CD8-positive, alpha-beta T cell (primary cell): ENCODE measurements at regions of chr5 and their contacts with region 1.

Region 1: DNA sequence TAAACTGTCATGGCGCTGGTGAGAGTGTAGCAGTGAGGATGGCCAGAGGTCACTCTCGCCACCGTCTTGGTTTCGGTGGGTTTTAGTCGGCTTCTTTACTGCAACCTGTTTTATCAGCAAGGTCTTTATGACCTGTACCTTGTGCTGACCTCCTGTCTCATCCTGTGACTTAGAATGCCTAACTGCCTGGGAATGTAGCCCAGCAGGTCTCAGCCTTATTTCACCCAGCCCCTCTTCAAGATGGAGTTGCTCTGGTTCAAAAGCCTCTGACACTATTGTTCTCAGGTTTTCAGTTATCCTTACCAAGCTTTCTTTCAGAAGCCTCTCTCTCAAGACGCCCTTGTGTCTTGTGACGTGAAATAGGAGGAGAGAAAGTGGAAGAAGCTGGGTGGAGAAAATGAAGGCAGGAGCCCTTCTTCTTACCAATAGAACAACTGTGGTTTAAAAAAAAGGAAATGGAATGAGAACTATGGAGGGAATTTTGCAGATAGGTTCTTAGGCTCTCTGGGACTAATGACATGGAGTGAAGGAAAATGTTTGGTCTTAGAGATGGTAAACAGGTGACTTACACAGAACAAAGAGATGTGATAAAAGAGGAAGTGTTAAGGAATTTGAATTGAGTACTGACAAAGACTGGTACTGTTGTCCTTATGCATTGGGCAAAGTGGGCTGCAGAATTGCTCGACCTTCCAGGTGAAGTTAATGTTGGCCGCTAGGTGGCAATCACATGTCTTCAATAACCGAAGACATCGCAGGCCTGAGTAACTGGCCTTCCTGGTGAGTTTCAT is 133.3 kb upstream of the RAI14 start:
- DNase-seq: peak in 8 of 9 experiments; percentile 21 to 70 (median 56)
- ATAC-seq: no peak
- H3K4me3 ChIP-seq: no peak overlapping the region
- H3K4me3 Mint-ChIP-seq: no peak overlapping the region
- H3K27ac ChIP-seq: no peak overlapping the region
- H3K27ac Mint-ChIP-seq: no peak overlapping the region
- H3K4me1 ChIP-seq: no peaks in the 10 kb centered on the region
- H3K4me1 Mint-ChIP-seq: peaks cover 2% of the 10 kb centered on the region
- H3K27me3 ChIP-seq: no peaks in the 10 kb centered on the region
- H3K27me3 Mint-ChIP-seq: peaks cover 4% of the 10 kb centered on the region
- CTCF ChIP-seq: peak; percentile 72

Region 2: GRCh38 chr5:34415559-34416198 is 107.1 kb before region 1 on chr5:
- CTCF ChIA-PET with region 1: no interaction called
- POLR2A ChIA-PET with region 1: no interaction called
- intact Hi-C with region 1: no loop called
- DNase-seq: no peak
- ATAC-seq: no peak
- H3K4me3 ChIP-seq: no peak overlapping the region
- H3K4me3 Mint-ChIP-seq: no peak overlapping the region
- H3K27ac ChIP-seq: no peak overlapping the region
- H3K27ac Mint-ChIP-seq: no peak overlapping the region
- H3K4me1 ChIP-seq: no peaks in the 10 kb centered on the region
- H3K4me1 Mint-ChIP-seq: no peaks in the 10 kb centered on the region
- H3K27me3 ChIP-seq: no peaks in the 10 kb centered on the region
- H3K27me3 Mint-ChIP-seq: peaks cover 8% of the 10 kb centered on the region
- CTCF ChIP-seq: no peak

Region 3: DNA sequence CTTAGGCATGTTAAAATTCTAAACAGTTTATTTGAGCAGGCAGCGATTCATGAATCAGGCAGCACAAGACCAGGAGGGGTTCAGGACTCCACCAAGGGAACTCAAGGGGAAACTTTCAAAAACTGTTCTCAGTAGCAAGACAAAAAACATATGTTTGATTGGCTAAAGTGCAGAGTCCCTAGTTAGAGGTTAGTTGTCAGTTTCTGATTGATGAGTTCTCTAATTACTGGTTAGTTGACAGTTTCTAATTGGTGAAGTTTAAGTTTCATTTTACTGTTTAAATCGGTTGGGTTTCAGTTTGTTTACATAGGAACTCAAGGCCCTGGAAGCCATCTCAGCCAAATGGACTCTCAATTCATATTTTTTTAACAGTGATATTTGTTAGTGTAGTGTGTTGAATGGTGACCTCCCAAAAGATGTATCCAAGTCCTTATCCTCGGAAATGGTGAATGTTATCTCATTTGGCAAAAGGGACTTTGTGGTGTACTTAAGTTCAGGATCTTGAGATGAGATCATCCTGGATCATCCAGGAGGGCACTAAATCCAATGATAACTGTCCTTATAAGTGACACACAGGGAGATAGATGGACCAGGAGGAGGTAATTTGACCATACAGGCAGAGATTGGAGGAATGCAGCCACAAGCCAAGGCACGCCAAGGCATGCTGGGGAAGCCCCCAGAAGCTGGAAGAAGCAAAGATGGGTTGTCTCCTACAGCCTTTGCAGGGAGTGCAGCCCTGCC is 85.9 kb before region 1 on chr5:
- CTCF ChIA-PET with region 1: no interaction called
- POLR2A ChIA-PET with region 1: no interaction called
- intact Hi-C with region 1: no loop called
- DNase-seq: no peak
- ATAC-seq: no peak
- H3K4me3 ChIP-seq: no peak overlapping the region
- H3K4me3 Mint-ChIP-seq: no peak overlapping the region
- H3K27ac ChIP-seq: no peak overlapping the region
- H3K27ac Mint-ChIP-seq: no peak overlapping the region
- H3K4me1 ChIP-seq: no peaks in the 10 kb centered on the region
- H3K4me1 Mint-ChIP-seq: no peaks in the 10 kb centered on the region
- H3K27me3 ChIP-seq: no peaks in the 10 kb centered on the region
- H3K27me3 Mint-ChIP-seq: peaks cover 6% of the 10 kb centered on the region
- CTCF ChIP-seq: no peak

Region 4: DNA sequence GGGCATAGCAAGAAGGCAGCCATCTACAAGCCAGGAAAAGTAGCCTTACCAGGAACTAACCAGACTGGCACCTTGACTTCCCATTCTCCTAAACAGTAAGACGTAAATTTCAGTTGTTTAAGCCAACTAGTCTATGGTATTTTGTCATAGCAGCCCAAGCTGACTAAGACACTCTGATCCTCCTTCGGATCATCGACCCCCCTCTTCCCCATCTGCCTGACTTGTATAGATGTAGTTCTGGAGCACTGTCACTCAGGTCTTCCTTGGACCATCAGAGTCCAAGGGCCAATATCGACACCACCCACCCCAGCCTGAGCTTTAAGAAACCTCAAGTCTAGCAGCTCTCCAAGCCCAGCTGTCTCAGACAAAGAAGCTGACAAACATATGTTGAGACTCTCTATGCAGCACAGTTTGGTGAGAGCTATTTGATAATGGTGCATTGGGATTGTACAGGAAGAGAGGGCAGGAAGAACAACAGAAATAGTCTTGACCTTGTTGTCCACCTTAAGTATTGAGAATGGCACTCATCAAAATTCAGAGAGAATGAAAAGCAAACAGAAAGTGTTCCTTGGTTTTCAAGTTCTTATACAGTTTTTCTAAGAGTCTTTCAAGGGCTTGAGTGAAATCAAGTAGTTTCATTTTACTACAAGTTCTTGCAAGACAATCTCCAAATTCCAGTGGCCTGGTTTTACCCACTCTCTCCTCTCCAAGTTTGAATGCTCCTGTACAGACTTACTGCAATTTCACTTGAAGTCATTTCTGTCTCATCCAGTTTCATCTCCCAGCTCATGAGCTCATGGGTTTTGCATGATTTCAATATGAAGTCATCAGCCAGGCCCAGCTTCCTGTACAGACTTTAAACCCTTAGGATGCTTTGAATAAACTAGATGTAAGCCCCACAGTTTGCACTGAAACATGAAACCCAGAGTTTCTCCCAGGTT is 11.1 kb after region 1 on chr5:
- CTCF ChIA-PET with region 1: interaction called, 22 read pairs
- POLR2A ChIA-PET with region 1: no interaction called
- intact Hi-C with region 1: no loop called
- DNase-seq: no peak
- ATAC-seq: no peak
- H3K4me3 ChIP-seq: no peak overlapping the region
- H3K4me3 Mint-ChIP-seq: no peak overlapping the region
- H3K27ac ChIP-seq: no peak overlapping the region
- H3K27ac Mint-ChIP-seq: no peak overlapping the region
- H3K4me1 ChIP-seq: no peaks in the 10 kb centered on the region
- H3K4me1 Mint-ChIP-seq: no peaks in the 10 kb centered on the region
- H3K27me3 ChIP-seq: no peaks in the 10 kb centered on the region
- H3K27me3 Mint-ChIP-seq: peaks cover 9% of the 10 kb centered on the region
- CTCF ChIP-seq: no peak

Region 5: DNA sequence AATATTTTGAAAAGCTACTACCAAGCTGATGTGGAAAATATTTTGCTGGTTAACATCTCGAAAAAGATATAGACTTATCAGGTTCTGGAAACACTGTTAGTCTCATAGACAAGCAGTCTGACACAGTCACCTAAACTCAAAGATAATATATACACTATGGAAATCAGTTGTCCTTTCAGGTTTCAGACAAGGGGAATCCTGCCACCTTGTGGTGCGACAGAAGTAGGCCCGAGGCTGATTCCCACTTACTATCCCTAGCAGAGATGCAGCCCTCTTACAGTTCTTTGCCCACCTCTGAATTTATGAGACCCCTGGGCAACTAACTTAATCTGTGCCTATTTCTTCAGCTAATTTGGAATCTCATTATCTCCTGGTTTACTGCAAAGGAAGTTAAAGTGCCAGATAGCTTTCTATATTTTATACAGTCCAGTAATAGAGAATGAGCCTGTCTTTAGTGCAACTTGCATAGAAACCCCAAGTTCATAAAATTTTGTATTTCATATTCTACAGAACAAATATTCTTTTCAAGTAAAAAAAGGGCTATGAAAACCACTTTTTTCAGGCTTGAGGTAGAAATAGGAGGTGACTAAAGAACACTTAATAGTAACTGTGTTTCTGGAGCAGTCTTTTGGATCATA is 375.6 kb after region 1 on chr5:
- CTCF ChIA-PET with region 1: interaction called, 77 read pairs
- POLR2A ChIA-PET with region 1: no interaction called
- intact Hi-C with region 1: loop called (anchors 1 kb)
- DNase-seq: peak; percentile 8 to 72 (median 60)
- ATAC-seq: peak; percentile 67
- H3K4me3 ChIP-seq: no peak overlapping the region
- H3K4me3 Mint-ChIP-seq: no peak overlapping the region
- H3K27ac ChIP-seq: no peak overlapping the region
- H3K27ac Mint-ChIP-seq: no peak overlapping the region
- H3K4me1 ChIP-seq: no peaks in the 10 kb centered on the region
- H3K4me1 Mint-ChIP-seq: no peaks in the 10 kb centered on the region
- H3K27me3 ChIP-seq: no peaks in the 10 kb centered on the region
- H3K27me3 Mint-ChIP-seq: no peaks in the 10 kb centered on the region
- CTCF ChIP-seq: peak; percentile 83

Region 6: DNA sequence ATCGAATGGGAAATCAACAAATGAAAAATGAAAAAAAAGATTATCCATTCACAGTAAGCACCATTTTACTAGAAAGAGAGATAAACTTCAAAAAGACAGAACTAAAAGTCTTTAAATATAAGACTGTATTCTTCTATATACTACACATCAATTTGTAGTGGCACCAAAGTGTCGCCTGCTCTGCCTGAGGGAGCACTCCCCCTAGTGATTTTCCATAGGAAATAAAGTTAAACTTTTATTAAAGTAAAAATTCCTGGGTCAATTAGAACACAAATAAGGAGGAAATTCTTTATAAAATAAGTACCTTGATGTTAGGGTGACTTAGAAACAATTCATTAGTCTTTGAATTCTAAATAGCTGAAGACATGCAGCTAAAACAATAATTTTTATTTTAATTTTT is 382.8 kb after region 1 on chr5:
- CTCF ChIA-PET with region 1: interaction called, 77 read pairs
- POLR2A ChIA-PET with region 1: no interaction called
- intact Hi-C with region 1: no loop called
- DNase-seq: no peak
- ATAC-seq: no peak
- H3K4me3 ChIP-seq: no peak overlapping the region
- H3K4me3 Mint-ChIP-seq: no peak overlapping the region
- H3K27ac ChIP-seq: no peak overlapping the region
- H3K27ac Mint-ChIP-seq: no peak overlapping the region
- H3K4me1 ChIP-seq: no peaks in the 10 kb centered on the region
- H3K4me1 Mint-ChIP-seq: no peaks in the 10 kb centered on the region
- H3K27me3 ChIP-seq: no peaks in the 10 kb centered on the region
- H3K27me3 Mint-ChIP-seq: no peaks in the 10 kb centered on the region
- CTCF ChIP-seq: no peak

Region 7: GRCh38 chr5:35003018-35003957 is 480.5 kb after region 1 on chr5:
- CTCF ChIA-PET with region 1: interaction called, 3 read pairs
- POLR2A ChIA-PET with region 1: no interaction called
- intact Hi-C with region 1: loop called (anchors 1 to 10 kb)
- DNase-seq: peak in 8 of 9 experiments; percentile 4 to 68 (median 50)
- ATAC-seq: no peak
- H3K4me3 ChIP-seq: no peak overlapping the region
- H3K4me3 Mint-ChIP-seq: no peak overlapping the region
- H3K27ac ChIP-seq: no peak overlapping the region
- H3K27ac Mint-ChIP-seq: no peak overlapping the region
- H3K4me1 ChIP-seq: no peaks in the 10 kb centered on the region
- H3K4me1 Mint-ChIP-seq: no peaks in the 10 kb centered on the region
- H3K27me3 ChIP-seq: no peaks in the 10 kb centered on the region
- H3K27me3 Mint-ChIP-seq: peaks cover 33% of the 10 kb centered on the region
- CTCF ChIP-seq: peak; percentile 76